Activated T-helper 1 cell treated with anti-CD3 and anti-CD28 coated beads, Interleukin-12 subunit alpha, Interleukin-12 subunit beta, Interleukin-2, Interleukin-4 antibody, amounts not matched to agents 30 ng/mL and 10 ng/mL and 1 ng/mL, durations not matched to agents 14 hours and 24 hours and 36 hours (primary cell): ENCODE measurements at regions of chr2 and their contacts with region 1.

Region 1: GRCh38 chr2:37871456-37872191 is 53.5 kb upstream of the RMDN2 start:
- DNase-seq: no peak
- H3K4me3 Mint-ChIP-seq: peak overlapping the region; percentile 83
- H3K27ac Mint-ChIP-seq: peak overlapping the region; percentile 100
- H3K4me1 Mint-ChIP-seq: peaks cover 51% of the 10 kb centered on the region
- H3K27me3 Mint-ChIP-seq: peaks cover 22% of the 10 kb centered on the region

Region 2: DNA sequence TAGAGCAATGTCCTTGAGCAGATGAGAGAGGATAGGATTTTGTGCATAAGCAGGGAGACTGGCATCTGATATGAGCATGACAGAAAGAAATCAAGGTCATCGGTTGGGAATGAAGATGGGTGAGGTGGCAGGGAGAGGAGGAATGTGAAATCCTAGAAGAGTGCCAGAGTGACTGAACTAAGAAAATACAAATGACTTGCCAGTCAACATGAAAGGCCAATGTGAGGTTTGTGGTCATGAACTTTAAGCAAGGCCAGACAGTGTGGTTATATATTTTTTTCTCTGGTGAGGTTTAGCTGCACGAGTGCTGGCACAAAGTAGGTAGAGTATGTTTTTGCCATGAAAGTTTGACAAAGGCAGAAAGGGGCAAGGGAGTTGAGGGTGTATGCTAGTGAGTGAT is 506.0 kb before region 1 on chr2:
- intact Hi-C with region 1: loop called (anchors 2 kb)
- DNase-seq: no peak
- H3K4me3 Mint-ChIP-seq: no peak overlapping the region
- H3K27ac Mint-ChIP-seq: no peak overlapping the region
- H3K4me1 Mint-ChIP-seq: no peaks in the 10 kb centered on the region
- H3K27me3 Mint-ChIP-seq: peaks cover 31% of the 10 kb centered on the region

Region 3: DNA sequence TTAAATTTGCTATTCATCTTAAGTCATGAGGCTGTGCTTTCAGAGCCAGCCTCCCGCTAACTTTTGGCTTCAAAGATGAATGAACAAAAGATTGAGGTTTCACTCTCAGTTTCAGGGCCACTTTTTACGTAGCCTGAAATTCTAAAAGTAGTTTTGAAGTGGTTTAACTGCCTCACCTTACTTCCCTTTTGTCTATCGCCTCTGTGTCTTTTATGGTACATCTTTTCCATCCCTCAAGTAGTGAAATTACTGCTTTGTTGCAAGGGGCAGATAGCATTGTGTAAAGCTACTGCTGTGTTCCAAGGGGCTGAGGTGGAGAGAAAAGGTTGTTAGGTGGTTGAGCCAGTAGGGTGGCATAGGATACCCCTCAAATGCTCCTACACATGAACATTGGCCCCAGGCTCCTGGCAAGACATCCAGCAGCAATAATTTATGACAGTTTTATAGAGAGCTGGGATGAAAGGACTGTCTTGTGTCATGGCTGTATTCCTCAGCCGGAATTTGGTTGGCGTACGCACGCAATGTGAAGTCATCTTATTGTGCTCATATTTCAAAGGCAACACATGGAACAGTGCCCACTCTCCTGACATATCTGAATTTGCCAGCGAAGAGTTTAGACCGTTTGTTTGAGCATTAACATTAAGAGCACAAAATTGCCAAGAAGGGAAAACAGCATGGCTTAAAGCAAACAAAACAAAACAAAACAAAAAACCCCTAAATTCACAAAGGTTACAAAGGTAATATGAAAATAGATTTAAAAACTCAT is 495.0 kb before region 1 on chr2:
- intact Hi-C with region 1: loop called (anchors 1 kb)
- DNase-seq: peak; percentile 29
- H3K4me3 Mint-ChIP-seq: peak overlapping the region; percentile 34
- H3K27ac Mint-ChIP-seq: peak overlapping the region; percentile 88
- H3K4me1 Mint-ChIP-seq: peaks cover 51% of the 10 kb centered on the region
- H3K27me3 Mint-ChIP-seq: peaks cover 51% of the 10 kb centered on the region

Region 4: DNA sequence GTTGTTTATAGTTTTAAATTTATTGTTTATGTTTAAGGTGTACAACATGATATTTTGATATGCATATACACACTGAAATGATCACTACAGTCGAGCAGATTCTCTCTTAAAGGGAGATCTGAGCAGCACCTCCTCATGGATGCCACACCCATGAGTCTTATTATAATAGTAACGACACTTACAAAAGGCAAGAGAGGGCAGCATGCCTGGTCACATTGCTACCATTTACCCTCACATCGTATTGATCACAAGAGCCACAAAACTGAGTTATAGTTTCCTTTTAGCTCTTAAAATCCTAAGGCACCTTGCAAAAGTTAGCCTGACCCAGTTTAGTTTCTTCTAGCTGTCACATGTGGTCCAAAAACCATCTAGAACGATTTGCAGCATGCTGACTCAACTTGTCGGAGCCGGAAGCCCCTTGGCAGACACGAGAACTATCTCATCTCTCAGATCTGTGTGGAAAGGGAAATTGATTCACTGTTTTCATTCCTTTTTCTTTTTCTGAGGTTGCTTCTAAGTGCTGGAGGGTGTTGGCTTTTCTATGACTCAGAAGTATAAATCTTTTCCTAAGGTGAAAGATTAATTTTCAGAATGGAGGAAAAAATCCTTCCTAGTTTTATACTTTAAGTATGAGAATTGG is 285.5 kb before region 1 on chr2:
- intact Hi-C with region 1: loop called (anchors 1 kb)
- DNase-seq: peak; percentile 62
- H3K4me3 Mint-ChIP-seq: peak overlapping the region; percentile 56
- H3K27ac Mint-ChIP-seq: peak overlapping the region; percentile 50
- H3K4me1 Mint-ChIP-seq: peaks cover 71% of the 10 kb centered on the region
- H3K27me3 Mint-ChIP-seq: peaks cover 2% of the 10 kb centered on the region

Region 5: GRCh38 chr2:37623971-37624900 is 247.4 kb before region 1 on chr2:
- intact Hi-C with region 1: loop called (anchors 2 kb)
- DNase-seq: no peak
- H3K4me3 Mint-ChIP-seq: peak overlapping the region; percentile 32
- H3K27ac Mint-ChIP-seq: peak overlapping the region; percentile 50
- H3K4me1 Mint-ChIP-seq: peaks cover 41% of the 10 kb centered on the region
- H3K27me3 Mint-ChIP-seq: no peaks in the 10 kb centered on the region

Region 6: DNA sequence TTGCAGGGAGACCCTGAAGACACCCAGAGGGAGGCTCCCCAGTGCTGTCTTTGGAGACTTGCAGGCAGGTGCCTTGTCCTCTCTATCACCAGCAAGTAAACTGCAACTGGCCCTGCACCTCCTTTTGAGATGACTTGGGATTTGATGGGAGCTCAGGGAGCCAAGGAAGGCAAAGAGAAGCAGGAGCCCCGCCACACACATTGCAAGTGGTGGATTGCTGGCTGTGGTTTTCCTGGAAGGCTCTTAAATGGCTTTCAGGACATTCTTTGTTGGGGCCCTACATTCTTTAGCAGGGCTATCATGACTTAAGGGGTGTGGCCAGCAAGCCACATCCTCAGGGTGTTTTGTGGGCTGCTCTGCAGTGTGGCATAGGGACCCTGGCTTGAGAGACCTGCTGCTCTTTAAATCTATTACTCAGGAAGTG is 160.3 kb before region 1 on chr2:
- intact Hi-C with region 1: loop called (anchors 2 kb)
- DNase-seq: peak; percentile 30
- H3K4me3 Mint-ChIP-seq: no peak overlapping the region
- H3K27ac Mint-ChIP-seq: no peak overlapping the region
- H3K4me1 Mint-ChIP-seq: peaks cover 44% of the 10 kb centered on the region
- H3K27me3 Mint-ChIP-seq: peaks cover 4% of the 10 kb centered on the region

Region 7: GRCh38 chr2:37832590-37833197 is 38.9 kb before region 1 on chr2:
- intact Hi-C with region 1: loop called (anchors 1 kb)
- DNase-seq: peak; percentile 60
- H3K4me3 Mint-ChIP-seq: no peak overlapping the region
- H3K27ac Mint-ChIP-seq: no peak overlapping the region
- H3K4me1 Mint-ChIP-seq: peaks cover 14% of the 10 kb centered on the region
- H3K27me3 Mint-ChIP-seq: no peaks in the 10 kb centered on the region